AG04449 (cell line): ENCODE measurements at regions of chrX and their contacts with region 1.

Region 1: GRCh38 chrX:107537815-107538214 is 88.4 kb downstream of the FRMPD3 start:
- DNase-seq: no peak
- H3K4me3 ChIP-seq: no peak overlapping the region
- CTCF ChIP-seq: peak; percentile 45

Region 2: GRCh38 chrX:107355533-107355932 is 182.3 kb before region 1 on chrX:
- CTCF ChIA-PET with region 1: no interaction called
- POLR2A ChIA-PET with region 1: no interaction called
- DNase-seq: no peak
- H3K4me3 ChIP-seq: no peak overlapping the region
- CTCF ChIP-seq: no peak

Region 3: DNA sequence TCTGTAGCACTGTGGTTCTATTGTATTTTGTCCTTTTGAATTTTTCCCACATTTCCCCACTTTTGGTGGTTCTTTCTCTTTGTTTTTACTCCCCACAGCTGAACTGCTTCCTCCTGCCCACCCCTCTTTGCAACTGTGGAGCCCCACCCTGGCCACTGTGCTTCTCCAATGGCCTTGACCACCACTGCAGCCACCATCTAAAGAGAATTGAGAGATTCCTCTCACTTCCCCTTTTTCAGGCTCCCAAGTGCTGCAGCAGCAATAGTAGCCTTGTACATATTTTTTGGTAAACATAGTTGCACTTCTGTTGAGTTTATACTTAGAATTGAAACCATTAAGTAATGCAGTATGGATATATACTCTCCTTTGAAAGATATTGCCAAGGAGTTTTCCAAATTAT is 139.7 kb before region 1 on chrX:
- CTCF ChIA-PET with region 1: no interaction called
- POLR2A ChIA-PET with region 1: no interaction called
- DNase-seq: no peak
- H3K4me3 ChIP-seq: no peak overlapping the region
- CTCF ChIP-seq: no peak

Region 4: DNA sequence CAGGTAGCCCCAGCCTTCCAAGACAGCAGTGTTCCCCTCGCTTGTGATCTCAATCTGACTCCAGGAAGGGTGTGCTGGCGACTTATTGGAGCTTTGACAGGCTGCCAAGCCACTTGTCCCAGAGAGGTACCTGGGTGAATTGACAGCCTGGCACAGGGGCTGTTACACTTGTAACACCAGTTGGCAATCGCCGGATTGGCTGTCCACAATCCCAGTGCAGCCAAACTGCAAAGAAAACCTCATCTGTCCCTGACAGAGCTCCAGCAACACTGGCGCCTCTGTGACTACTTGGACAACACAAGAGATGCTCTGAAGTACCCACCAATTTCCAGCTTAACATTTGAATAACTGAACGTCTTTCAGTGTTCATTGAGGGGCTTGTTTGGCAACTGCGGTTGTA is 13.7 kb after region 1 on chrX:
- CTCF ChIA-PET with region 1: interaction called, 23 read pairs
- POLR2A ChIA-PET with region 1: no interaction called
- DNase-seq: no peak
- H3K4me3 ChIP-seq: no peak overlapping the region
- CTCF ChIP-seq: no peak

Region 5: GRCh38 chrX:107627838-107628661 is 90.2 kb after region 1 on chrX and contains the start of gene PRPS1:
- CTCF ChIA-PET with region 1: interaction called, 62 read pairs
- POLR2A ChIA-PET with region 1: interaction called, 3 read pairs
- DNase-seq: peak; percentile 71
- H3K4me3 ChIP-seq: peak within 1 kb of the TSS; percentile 75
- CTCF ChIP-seq: no peak

Region 6: GRCh38 chrX:107654872-107655761 is 117.3 kb after region 1 on chrX:
- CTCF ChIA-PET with region 1: interaction called, 24 read pairs
- POLR2A ChIA-PET with region 1: interaction called, 3 read pairs
- DNase-seq: no peak
- H3K4me3 ChIP-seq: no peak overlapping the region
- CTCF ChIP-seq: peak; percentile 69

Region 7: DNA sequence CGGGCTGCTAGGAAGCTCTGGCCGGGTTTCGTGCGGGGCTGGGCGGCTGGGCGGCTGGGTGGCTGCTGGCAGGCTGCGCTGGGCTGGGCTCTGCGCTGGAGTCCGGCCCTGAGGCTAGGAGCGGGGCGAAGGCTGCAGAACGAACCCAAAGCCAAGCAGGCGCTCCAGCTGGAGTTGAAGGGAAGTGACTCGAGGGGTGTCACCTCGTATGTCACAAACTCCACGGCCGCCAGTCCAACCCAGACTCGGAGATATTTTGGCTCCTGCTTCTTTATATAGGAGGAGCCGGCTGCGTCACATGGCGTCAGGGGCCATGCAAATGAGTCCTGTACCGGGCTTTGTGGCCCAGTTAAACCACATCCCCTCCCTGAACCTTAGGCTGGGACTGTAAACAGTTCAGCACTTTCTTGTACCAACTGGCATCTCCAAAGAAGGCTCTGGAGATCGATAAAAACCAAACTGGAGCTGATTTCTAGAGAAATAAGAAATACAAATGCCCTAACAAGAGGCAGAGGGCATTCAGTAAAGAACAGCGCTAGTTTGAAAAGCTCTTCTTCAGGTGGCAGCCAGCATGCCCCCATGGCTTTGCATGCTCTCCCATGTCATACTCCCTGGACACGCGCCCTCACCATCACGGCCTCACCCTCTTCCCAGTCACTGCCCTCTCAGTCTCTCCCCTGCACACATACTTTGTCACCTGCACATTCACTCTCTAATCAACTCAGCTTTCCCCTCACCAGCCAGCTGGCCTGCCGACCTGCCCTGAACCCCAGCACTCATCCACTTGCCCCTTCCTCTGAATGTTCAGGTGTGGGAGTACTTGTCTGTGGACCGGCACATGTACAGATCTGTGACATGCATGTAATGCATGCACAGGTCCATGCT is 179.2 kb after region 1 on chrX:
- CTCF ChIA-PET with region 1: interaction called, 35 read pairs
- POLR2A ChIA-PET with region 1: no interaction called
- DNase-seq: no peak
- H3K4me3 ChIP-seq: peak overlapping the region; percentile 64
- CTCF ChIP-seq: no peak

Region 8: DNA sequence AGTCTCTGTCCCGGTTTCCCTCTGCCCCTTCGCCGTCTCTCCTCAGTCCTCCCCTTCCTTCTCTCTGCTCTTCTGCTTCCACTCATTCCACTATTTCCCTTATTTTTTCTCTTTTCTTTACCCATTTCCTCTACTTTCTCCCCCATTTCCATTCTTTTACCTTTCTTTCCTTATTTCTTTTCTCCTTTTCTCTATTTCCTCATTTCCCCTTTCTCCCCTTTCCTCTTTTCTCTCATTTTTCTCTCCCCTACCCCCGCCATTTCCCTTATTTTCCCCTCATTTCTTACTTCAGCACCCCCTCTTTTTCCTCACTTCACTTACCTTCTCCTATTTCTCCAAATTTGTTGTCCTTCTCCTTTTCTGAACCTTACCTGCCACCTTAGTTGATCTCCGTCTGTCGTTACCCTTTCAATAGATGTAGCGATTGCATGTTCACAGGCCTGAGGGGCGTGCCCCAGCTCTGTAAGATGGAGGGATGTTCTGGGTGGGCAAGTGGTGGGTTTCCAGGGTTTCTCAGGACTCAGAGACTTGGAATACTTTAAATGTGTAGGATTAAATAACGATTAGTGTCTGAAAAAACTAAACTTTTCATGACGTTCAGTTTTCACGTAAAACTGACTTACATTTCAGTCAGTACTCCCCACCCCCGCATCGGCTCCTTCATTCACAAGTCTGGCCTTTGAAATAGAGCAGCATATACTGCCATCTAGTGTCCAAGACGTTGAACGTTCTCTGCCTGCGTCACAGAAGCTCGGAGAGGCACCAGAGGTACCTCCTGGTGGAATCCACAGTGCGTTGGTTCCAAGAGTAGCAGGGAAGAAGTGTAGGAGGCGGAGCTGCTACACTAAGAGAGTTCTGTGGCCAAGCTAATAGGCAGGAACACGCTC is 239.1 kb after region 1 on chrX:
- CTCF ChIA-PET with region 1: interaction called, 14 read pairs
- POLR2A ChIA-PET with region 1: no interaction called
- DNase-seq: peak; percentile 57
- H3K4me3 ChIP-seq: peak overlapping the region; percentile 49
- CTCF ChIP-seq: peak; percentile 50